HepG2 (cell line): ENCODE measurements at regions of chr11 and their contacts with region 1.

Region 1: GRCh38 chr11:12052676-12053605 is 44.5 kb upstream of the DKK3 start:
- DNase-seq: no peak
- ATAC-seq: peak; percentile 42; the same call in 2 of the 3 replicates
- H3K4me3 ChIP-seq: no peak overlapping the region
- H3K27ac ChIP-seq: no peak overlapping the region
- H3K4me1 ChIP-seq: peaks cover 36% of the 10 kb centered on the region
- H3K27me3 ChIP-seq: no peaks in the 10 kb centered on the region
- CTCF ChIP-seq: peak; percentile 54
- EP300 ChIP-seq: no peak
- POLR2A ChIP-seq: no peak
- RAD21 ChIP-seq: no peak

Region 2: DNA sequence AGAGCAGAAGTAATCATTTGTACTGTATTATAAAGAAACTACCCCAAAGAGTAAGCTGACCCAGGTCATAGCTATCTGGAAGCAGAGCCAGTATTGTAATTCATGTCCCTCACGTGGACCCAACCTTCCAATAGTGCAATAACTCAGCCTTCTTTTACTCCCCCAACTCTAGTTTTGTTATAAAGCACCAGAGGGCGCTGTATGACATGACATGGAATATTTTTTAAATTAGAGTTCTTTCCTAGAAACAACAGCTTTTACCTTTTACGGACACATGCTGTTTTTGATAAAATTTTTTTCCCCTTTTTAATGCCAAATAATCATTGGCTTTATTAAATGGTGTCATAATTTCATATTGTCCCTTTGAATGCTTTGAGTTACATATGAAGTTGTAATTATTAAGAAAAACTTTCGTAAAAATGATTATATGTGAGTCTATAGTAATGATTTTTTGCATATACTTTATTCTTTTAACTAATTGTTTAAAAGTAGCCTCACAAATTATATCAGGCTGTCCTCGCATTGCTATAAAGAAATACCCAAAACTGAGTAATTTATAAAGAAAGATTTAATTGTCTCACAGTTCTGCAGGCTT is 121.4 kb before region 1 on chr11:
- CTCF ChIA-PET with region 1: no interaction called
- POLR2A ChIA-PET with region 1: no interaction called
- in situ Hi-C with region 1: loop called (anchors 5 kb)
- intact Hi-C with region 1: no loop called
- DNase-seq: peak; percentile 62
- ATAC-seq: peak; percentile 88
- H3K4me3 ChIP-seq: no peak overlapping the region
- H3K27ac ChIP-seq: no peak overlapping the region
- H3K4me1 ChIP-seq: no peaks in the 10 kb centered on the region
- H3K27me3 ChIP-seq: no peaks in the 10 kb centered on the region
- CTCF ChIP-seq: peak; percentile 62
- EP300 ChIP-seq: no peak
- POLR2A ChIP-seq: no peak
- RAD21 ChIP-seq: 0 out of 2 replicates have a peak, but pooled peaks have one; percentile 20

Region 3: GRCh38 chr11:12087075-12088004 is 34.4 kb after region 1 on chr11:
- CTCF ChIA-PET with region 1: no interaction called
- POLR2A ChIA-PET with region 1: no interaction called
- in situ Hi-C with region 1: no loop called
- intact Hi-C with region 1: loop called (anchors 5 kb)
- DNase-seq: no peak
- ATAC-seq: peak; percentile 55
- H3K4me3 ChIP-seq: no peak overlapping the region
- H3K27ac ChIP-seq: no peak overlapping the region
- H3K4me1 ChIP-seq: peaks cover 71% of the 10 kb centered on the region
- H3K27me3 ChIP-seq: no peaks in the 10 kb centered on the region; a peak in 1 of 5 replicates
- CTCF ChIP-seq: no peak
- EP300 ChIP-seq: no peak
- POLR2A ChIP-seq: no peak
- RAD21 ChIP-seq: no peak

Region 4: DNA sequence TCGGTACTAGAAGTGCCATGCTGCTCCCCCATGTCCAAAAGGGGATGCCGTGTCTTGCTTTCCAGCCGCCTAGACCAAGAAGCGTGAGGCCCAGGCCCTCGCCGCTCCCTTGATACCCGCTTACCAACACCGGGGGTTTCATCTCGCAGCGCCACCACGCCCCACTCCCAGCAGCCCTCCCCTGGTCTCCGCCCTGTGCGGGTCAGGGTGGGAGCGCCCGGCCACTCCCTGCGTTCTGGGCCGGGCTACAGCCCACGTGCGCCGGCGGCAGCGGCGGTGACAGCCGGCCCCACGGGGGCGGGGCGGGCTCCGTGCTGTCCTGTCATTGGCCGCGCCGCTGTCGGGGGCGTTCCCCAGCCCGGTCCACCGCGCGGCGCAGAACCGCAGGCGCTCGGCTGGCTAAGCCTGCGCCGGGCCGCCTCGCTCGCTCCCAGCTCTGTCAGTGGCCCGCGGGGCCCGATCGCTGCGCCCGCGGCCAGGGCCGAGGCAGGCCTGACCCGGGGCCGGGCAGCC is 57.3 kb after region 1 on chr11 and contains the start of gene MICAL2:
- CTCF ChIA-PET with region 1: no interaction called
- POLR2A ChIA-PET with region 1: no interaction called
- in situ Hi-C with region 1: no loop called
- intact Hi-C with region 1: loop called (anchors 10 kb)
- DNase-seq: peak; percentile 64
- ATAC-seq: peak; percentile 98
- H3K4me3 ChIP-seq: peak within 1 kb of the TSS; percentile 43 to 59 (median 55)
- H3K27ac ChIP-seq: no peak within 1 kb of the TSS
- H3K4me1 ChIP-seq: peaks cover 33% of the 10 kb centered on the region
- H3K27me3 ChIP-seq: peaks cover 0 to 3% of the 10 kb centered on the region in 2 experiments; a peak in 2 of 5 replicates
- CTCF ChIP-seq: 0 out of 2 replicates have a peak, but pooled peaks have one; percentile 14
- EP300 ChIP-seq: no peak
- POLR2A ChIP-seq: no peak
- RAD21 ChIP-seq: no peak
- total RNA-seq, gene MICAL2: 1.1 and 1.4 TPM in 2 replicates

Region 5: GRCh38 chr11:12258451-12258850 is 205.5 kb after region 1 on chr11:
- CTCF ChIA-PET with region 1: no interaction called
- POLR2A ChIA-PET with region 1: no interaction called
- in situ Hi-C with region 1: no loop called
- intact Hi-C with region 1: no loop called
- DNase-seq: peak; percentile 65
- ATAC-seq: peak; percentile 36; the same call in 2 of the 3 replicates
- H3K4me3 ChIP-seq: no peak overlapping the region
- H3K27ac ChIP-seq: no peak overlapping the region
- H3K4me1 ChIP-seq: peaks cover 37% of the 10 kb centered on the region
- H3K27me3 ChIP-seq: no peaks in the 10 kb centered on the region
- CTCF ChIP-seq: no peak
- EP300 ChIP-seq: no peak
- POLR2A ChIP-seq: no peak
- RAD21 ChIP-seq: no peak